Cardiac septum (tissue), 1 donor: ENCODE measurements at regions of chr7 and their contacts with region 1.

Region 1: GRCh38 chr7:134432296-134433152 is 26.4 kb downstream of the AKR1B1 start:
- DNase-seq: peak; percentile 87

Region 2: GRCh38 chr7:134327896-134328295 is 104.6 kb before region 1 on chr7:
- intact Hi-C with region 1: no loop called
- DNase-seq: no peak

Region 3: GRCh38 chr7:134458806-134459698 is 26.5 kb after region 1 on chr7 and contains the start of gene AKR1B1:
- intact Hi-C with region 1: loop called (anchors 2 kb)
- DNase-seq: peak; percentile 92
- total RNA-seq, gene AKR1B1: 193 TPM

Region 4: GRCh38 chr7:134514663-134515062 is 82.1 kb after region 1 on chr7:
- intact Hi-C with region 1: loop called (anchors 2 kb)
- DNase-seq: no peak

Region 5: GRCh38 chr7:134605973-134606923 is 173.7 kb after region 1 on chr7:
- intact Hi-C with region 1: loop called (anchors 2 kb)
- DNase-seq: peak; percentile 78

Region 6: GRCh38 chr7:134646425-134647305 is 214.1 kb after region 1 on chr7 and contains the start of gene BPGM:
- intact Hi-C with region 1: no loop called
- DNase-seq: peak; percentile 99
- total RNA-seq, gene BPGM: 13.2 TPM